Left ventricle myocardium superior (tissue), 1 donor: ENCODE measurements at regions of chr19 and their contacts with region 1.

Region 1: DNA sequence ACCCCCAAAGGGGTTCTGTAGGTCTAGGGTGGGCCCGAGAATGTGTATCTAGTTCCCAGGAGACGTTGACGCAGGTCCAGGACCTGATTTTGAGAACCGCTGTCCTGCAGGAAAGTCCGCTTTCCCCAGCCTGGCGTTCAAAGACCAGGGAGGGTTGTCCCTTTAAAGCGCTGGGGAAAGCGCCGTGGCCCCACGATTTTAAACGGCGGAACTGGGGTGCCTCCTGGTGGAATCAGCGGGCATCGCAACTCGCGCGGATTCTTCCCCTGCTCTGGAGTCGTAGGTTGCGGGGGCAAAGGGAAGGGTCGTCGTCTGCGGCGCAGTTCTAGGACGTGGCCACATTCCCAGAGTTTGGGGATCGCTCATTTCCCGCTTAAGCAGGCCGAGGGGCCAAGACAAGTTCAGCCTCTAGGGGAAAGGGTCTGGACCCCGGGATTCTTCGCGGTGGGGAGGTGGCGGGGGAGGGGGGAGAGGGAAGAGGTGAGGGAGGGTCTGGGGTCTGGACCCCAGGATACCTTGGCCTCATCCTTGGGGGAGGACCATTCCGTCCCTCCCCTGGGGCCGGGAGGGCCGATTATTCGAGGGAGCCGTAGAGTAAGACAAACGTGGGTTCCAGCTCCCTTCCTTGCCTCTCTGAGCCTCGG is 7.7 kb downstream of the PNMA8B start:
- DNase-seq: peak; percentile 89
- ATAC-seq: peak; percentile 75

Region 2: DNA sequence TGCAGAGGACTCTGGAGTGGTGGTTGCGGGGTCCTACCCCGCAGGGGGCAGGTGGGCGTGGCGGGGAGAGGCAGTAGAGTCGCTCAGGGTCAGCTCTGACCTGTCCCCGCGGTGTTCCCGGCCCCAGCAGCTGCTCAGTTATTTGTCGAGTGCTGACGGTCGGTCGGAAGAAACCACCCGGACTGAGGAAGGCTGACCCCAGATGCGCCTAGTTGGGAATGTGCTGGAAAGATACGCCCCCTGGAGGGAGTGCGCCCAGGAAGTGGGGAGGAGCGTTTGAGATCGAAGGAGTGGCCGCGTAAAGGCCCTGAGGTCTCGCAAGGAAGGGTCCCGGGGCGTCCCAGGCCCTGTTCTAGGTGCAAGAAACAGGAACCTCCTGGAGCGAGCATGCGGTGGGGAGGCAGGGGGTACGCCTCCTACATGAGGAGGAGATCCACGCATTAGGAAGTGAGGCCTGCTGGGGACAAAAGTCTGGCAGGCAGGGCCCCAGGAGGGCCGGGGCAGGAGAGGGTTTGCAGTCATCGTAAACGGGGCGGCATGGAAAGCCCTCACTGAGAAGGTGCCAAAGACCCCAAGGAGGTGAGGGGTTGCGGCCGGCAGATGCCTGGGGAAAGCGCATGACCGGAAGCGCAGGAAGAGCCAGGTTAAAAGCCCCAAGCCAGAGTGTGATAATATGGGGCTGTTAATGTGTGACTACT is 83.7 kb before region 1 on chr19:
- intact Hi-C with region 1: loop called (anchors 5 kb)
- DNase-seq: peak; percentile 77
- ATAC-seq: peak; percentile 65

Region 3: DNA sequence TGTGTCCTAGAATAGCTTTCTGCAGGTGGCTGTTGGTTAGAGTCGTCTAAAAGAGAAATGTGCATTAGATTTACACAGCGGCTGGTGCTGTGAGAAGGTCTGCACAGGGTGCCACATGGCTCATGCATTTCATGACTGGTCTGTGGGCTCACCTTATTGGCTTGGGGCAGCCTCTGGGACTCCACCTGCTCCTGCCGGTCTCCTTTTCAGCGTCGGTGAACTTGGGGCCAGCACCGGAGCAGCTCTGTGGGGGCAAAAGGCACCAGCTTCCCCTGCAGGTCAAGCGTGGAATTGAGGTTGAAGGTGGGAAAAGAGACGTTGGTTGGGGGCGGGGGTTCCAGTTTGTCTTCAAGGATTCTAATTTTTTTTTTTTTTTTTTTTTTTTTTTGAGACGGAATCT is 56.1 kb before region 1 on chr19:
- intact Hi-C with region 1: no loop called
- DNase-seq: no peak
- ATAC-seq: no peak

Region 4: DNA sequence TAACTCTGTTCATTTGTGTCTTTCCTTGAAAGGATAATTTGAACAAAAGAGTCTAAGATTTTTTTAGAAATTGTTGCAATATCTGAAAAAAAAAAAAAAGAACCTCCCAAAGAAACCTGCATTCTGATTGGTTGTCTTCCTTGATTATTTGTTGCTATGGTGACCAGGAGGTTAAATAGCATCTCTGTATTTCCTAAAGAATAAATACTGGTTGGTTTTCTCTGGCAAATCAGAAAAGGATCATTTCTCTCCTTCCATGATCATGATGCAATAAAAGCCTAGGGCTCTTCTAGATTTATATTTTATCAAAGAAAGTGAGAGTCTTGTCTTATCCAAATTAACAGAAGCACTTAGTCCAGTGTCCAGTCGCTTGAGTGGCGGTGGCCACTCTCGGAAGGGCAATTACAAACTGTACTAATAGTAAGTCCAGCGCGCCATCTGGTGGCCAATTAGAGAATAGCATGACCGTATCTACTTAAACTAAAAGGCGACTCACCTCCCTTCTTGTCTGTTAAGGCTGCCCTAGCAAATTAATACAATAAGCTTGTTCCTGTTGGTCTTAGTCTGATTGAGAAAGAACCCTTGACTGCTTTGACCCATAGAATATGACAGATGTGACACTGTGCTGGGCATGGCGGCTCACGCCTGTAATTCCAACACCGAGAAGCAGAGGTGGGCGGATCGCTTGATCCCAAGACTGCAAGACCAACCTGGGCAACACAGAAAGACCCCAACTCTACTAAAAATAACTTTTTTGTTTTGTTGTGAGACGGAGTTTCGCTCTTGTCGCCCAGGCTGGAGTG is 54.7 kb after region 1 on chr19:
- intact Hi-C with region 1: no loop called
- DNase-seq: peak; percentile 89
- ATAC-seq: peak; percentile 89

Region 5: GRCh38 chr19:46648060-46648960 is 160.4 kb after region 1 on chr19:
- intact Hi-C with region 1: no loop called
- DNase-seq: no peak
- ATAC-seq: no peak